ENCODE measurements at regions of chr19 and their contacts with region 1.

Region 1: GRCh38 chr19:18440415-18440877 is 2.5 kb upstream of the ISYNA1 start:
- H3K4me3 ChIP-seq: no peak overlapping the region
- H3K27ac ChIP-seq: no peak overlapping the region
- H3K4me1 ChIP-seq: peaks cover 9% of the 10 kb centered on the region
- CTCF ChIP-seq: no peak; the same call in 1 of the 2 replicates

Region 2: DNA sequence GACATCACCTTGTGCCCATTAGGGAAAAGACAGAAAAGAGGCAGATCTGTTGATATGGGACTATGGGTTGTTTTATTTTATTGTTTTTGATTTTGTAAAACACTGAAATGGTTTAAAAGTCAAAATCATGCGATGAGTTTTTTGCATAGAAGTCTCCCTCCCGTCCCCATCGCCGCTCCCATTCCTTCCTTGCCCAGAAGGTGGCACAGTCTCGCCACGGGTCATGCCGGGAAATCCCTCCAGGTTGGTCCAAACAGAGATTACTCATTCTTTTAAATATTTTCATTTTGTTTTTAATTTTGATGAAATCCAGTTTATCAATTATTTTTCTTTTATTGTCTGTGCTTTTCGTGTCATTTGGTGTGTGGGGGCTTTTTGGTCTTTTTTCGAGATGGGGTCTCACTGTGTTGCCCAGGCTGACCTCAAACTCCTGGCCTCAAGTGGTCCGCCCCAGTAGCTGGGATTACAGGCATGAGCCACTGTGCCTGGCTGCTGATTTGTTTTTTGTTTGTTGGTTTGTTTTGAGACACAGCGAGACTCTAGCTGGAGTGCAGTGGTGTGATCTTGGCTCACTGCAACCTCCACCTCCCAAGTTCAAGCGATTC is 90.8 kb before region 1 on chr19:
- CTCF ChIA-PET with region 1: no interaction called
- POLR2A ChIA-PET with region 1: interaction called, 12 read pairs
- H3K4me3 ChIP-seq: no peak overlapping the region
- H3K27ac ChIP-seq: no peak overlapping the region
- H3K4me1 ChIP-seq: no peaks in the 10 kb centered on the region
- CTCF ChIP-seq: peak; percentile 68

Region 3: DNA sequence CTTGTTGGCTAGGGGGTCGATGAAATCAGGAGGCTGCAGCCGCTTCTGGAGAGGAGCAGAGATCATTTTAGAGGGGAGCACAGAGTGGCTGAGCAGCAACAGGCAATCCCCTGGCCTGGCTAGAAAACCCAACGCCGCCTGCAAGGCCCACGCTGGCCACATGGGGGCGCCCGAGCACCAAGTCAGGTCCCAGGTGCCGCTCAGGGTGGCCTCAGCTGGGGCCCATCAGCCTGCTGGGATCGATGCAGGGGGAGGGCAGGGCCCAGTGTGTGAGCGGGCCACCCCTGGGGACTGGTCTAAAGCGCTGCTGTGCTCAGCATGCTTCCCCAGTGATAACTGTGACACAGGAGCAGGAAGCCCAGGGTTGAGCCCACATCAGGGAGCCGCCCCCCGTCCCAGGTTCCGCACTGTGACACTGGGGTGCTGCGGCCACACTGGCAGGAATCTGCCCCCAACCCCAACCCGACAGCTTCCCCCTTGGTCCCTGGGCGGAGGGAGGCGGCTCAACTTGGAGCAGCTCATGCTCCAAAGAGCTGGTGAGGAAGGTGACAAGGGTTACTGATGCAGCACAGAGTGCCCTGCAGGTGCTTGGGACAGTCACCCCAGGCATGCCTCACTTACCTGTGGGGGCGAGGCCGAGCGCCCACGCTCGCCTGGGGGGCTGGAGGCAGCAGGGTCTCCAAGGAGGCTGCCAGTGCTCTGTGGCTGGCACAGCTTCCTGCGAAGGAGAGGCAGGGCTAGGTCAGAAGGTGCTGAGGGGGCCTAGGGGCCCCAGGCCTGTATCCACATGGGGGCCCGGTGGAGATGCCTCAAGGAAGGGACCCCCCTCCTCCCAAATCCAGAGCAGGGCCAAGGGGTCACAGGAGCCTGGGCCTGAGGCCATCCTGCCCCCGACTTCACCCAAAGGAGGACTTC is 10.7 kb after region 1 on chr19:
- CTCF ChIA-PET with region 1: interaction called, 25 read pairs
- POLR2A ChIA-PET with region 1: no interaction called
- H3K4me3 ChIP-seq: no peak overlapping the region
- H3K27ac ChIP-seq: no peak overlapping the region
- H3K4me1 ChIP-seq: no peaks in the 10 kb centered on the region
- CTCF ChIP-seq: peak; percentile 95

Region 4: DNA sequence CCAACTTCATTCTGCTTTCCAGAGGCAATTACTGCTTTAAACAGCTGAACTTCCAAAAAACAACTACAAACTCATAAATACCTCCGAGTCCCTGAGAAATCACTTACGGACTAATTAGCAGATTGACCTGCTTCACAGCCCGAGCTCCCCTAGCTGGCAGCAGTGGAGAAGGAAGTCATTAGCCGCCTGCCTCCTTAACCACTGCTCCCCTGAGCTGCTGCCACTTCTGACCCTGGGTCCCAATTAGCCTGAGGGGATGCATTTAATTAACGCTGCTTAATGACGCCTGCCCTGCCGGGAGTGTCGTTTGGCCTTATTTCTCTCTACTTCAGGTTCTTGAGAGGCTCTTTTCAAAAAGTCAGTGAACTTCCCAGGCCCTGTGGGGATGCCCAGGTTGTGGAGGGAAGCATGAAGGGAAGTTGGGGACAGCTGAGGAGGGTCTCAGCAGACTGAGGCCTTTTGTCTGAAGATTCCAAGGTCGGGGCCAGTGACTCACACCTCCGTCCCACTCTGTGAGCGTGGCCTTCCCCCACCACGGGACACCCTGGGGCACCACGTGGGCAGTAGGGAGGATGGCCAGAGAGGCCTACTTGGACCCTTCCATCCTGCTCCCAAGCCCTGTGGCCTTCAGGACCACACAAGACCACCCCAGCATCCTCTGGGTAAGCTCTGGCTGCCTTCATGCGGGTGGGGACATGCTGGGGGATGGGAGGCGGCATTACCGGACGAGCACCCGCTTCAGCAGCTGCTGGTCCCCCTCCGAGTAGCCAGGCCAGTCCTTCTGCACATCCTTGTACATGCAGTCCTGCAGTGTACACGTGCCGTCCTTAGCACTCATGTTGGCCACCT is 17.3 kb after region 1 on chr19:
- CTCF ChIA-PET with region 1: interaction called, 85 read pairs
- POLR2A ChIA-PET with region 1: interaction called, 3 read pairs
- H3K4me3 ChIP-seq: no peak overlapping the region
- H3K27ac ChIP-seq: no peak overlapping the region
- H3K4me1 ChIP-seq: no peaks in the 10 kb centered on the region
- CTCF ChIP-seq: no peak

Region 5: GRCh38 chr19:18580311-18580710 is 139.9 kb after region 1 on chr19:
- CTCF ChIA-PET with region 1: no interaction called
- POLR2A ChIA-PET with region 1: no interaction called
- H3K4me3 ChIP-seq: no peak overlapping the region
- H3K27ac ChIP-seq: no peak overlapping the region
- H3K4me1 ChIP-seq: no peaks in the 10 kb centered on the region
- CTCF ChIP-seq: no peak

Measured in HEK293 (cell line).